ENCODE measurements at regions of chr6 and their contacts with region 1.

Region 1: DNA sequence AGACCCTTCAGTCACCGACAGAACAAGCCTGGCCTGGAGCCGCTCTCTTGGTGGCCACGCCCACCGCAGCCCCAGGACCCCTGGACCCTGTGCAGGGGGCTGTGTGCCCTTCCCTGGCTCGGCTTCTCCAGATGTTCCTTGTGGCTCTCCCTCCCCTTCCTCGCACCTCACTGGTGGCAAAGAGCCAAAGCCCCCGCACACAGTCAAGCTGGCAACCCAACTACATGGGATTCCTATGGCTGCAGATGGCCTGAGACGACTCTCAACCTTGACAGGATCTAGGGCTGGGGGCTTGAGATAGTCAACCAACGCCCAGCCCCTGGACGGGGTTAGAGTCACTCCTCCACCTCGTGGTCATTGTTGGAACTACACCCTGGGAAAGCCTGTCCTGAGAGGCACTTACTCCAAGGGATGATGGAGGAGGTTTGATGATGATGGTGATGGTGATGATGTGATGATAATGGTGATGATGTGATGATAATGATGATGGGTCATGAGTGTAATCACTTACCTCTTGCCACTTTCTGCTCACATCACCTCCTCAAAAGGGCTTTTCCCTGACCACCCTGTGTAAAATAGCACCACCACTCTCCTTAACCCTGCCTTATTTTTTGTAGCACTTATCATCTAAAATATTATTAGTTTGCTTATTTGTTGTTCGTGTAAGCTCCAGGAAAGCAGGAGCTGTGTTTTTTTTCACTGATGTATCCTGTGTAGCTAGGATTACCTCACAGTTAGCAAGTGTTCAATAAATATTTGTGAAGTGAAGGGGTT is 278.4 kb downstream of the LRFN2 start:
- DNase-seq: peak; percentile 61
- ATAC-seq: peak; percentile 75 to 81

Region 2: GRCh38 chr6:39361657-39362486 is 946.8 kb before region 1 on chr6:
- intact Hi-C with region 1: loop called in 1 of 2 experiments (anchors 10 kb)
- DNase-seq: peak; percentile 62
- ATAC-seq: peak; percentile 82 to 83

Measured in left cardiac atrium (tissue), 4 donors.